MCF 10A (cell line): ENCODE measurements at regions of chr1 and their contacts with region 1.

Region 1: GRCh38 chr1:182084487-182085316 is 23.2 kb upstream of the ZNF648 start:
- DNase-seq: peak; percentile 91
- H3K4me3 Mint-ChIP-seq: no peak overlapping the region
- H3K27ac Mint-ChIP-seq: no peak overlapping the region
- H3K4me1 Mint-ChIP-seq: peaks cover 27% of the 10 kb centered on the region
- H3K27me3 Mint-ChIP-seq: no peaks in the 10 kb centered on the region
- CTCF ChIP-seq: peak; percentile 98

Region 2: DNA sequence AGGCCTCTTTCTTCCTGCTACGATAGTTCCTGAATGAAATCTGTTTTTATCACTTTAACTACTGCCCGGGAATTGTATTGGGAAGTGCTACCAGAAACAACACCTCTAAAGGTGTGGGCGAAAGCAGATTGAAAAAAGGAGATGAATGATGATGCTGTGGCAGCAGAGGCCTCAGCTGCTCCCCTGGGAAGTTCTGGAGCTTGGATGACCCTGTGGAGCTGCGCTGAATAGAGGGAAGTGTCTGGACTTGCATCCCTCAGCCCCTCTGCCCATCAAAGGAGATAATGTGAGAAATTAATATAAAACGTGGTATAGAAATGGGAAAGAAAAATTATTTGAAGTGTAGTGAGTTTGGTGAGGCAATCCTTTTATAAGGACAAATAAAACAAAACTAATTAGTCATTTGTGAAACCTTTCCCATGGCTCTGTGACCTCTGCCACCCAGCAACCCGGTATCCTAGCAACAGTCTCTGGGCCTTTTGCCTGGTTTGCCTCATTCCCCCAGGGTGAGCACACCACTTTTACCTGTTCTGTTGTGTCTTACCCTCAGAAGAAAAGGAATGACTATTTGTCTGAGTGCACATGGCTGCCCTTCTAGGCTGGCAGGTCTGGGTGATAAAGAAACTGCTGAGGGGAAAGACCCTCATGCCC is 1504.6 kb before region 1 on chr1:
- CTCF ChIA-PET with region 1: no interaction called
- POLR2A ChIA-PET with region 1: no interaction called
- intact Hi-C with region 1: no loop called
- DNase-seq: peak; percentile 93
- H3K4me3 Mint-ChIP-seq: no peak overlapping the region
- H3K27ac Mint-ChIP-seq: peak overlapping the region; percentile 30
- H3K4me1 Mint-ChIP-seq: peaks cover 38% of the 10 kb centered on the region
- H3K27me3 Mint-ChIP-seq: no peaks in the 10 kb centered on the region
- CTCF ChIP-seq: no peak

Region 3: GRCh38 chr1:181479137-181479745 is 605.5 kb before region 1 on chr1:
- CTCF ChIA-PET with region 1: interaction called, 169 read pairs
- POLR2A ChIA-PET with region 1: interaction called, 4 read pairs
- intact Hi-C with region 1: loop called (anchors 1 kb)
- DNase-seq: peak; percentile 80
- H3K4me3 Mint-ChIP-seq: no peak overlapping the region
- H3K27ac Mint-ChIP-seq: no peak overlapping the region
- H3K4me1 Mint-ChIP-seq: no peaks in the 10 kb centered on the region
- H3K27me3 Mint-ChIP-seq: peaks cover 28% of the 10 kb centered on the region
- CTCF ChIP-seq: peak; percentile 97

Region 4: DNA sequence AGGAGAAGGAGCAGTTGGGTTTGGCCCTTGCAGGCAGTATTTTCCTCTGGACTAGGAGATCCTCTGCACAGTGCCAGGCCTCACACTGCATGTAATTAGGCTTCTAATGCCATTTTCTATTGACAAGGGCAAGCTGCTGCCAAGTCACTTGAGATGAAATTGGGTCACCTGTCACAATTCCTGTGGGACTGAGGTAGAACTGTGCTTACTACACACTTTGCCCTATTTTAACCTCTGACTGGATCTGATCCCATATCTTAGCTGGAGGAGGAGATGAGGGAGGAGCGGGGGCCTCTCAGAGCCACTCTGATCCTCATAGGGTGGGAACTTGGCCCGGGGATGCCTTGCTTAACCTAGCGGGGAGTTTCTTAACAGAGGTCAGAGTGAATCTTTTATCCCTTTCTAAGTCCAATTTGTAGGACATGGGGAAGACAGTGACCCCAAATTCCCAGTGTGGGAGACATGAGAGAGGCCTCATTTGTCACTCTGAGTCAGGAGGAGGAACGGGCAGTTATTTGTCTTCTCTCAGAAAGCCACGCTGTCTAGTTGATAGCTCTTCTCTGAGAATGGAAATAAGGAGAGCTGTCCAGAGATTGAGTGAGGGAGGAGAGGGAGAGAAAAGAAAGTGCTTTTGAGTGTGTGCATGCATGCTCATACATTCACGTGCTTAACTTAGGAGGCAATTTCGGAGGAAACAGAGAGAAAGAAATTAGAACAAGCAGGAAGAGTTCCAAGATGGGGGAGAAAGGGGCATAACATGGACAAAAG is 480.0 kb before region 1 on chr1:
- CTCF ChIA-PET with region 1: no interaction called
- POLR2A ChIA-PET with region 1: no interaction called
- intact Hi-C with region 1: no loop called
- DNase-seq: no peak
- H3K4me3 Mint-ChIP-seq: no peak overlapping the region
- H3K27ac Mint-ChIP-seq: no peak overlapping the region
- H3K4me1 Mint-ChIP-seq: no peaks in the 10 kb centered on the region
- H3K27me3 Mint-ChIP-seq: peaks cover 38% of the 10 kb centered on the region
- CTCF ChIP-seq: no peak

Region 5: GRCh38 chr1:181992072-181992471 is 92.6 kb before region 1 on chr1:
- CTCF ChIA-PET with region 1: no interaction called
- POLR2A ChIA-PET with region 1: no interaction called
- intact Hi-C with region 1: no loop called
- DNase-seq: no peak
- H3K4me3 Mint-ChIP-seq: no peak overlapping the region
- H3K27ac Mint-ChIP-seq: no peak overlapping the region
- H3K4me1 Mint-ChIP-seq: no peaks in the 10 kb centered on the region
- H3K27me3 Mint-ChIP-seq: peaks cover 26% of the 10 kb centered on the region
- CTCF ChIP-seq: no peak

Region 6: GRCh38 chr1:182110635-182111034 is 25.9 kb after region 1 on chr1:
- CTCF ChIA-PET with region 1: interaction called, 19 read pairs
- POLR2A ChIA-PET with region 1: interaction called, 4 read pairs
- intact Hi-C with region 1: no loop called
- DNase-seq: no peak
- H3K4me3 Mint-ChIP-seq: no peak overlapping the region
- H3K27ac Mint-ChIP-seq: no peak overlapping the region
- H3K4me1 Mint-ChIP-seq: peaks cover 14% of the 10 kb centered on the region
- H3K27me3 Mint-ChIP-seq: no peaks in the 10 kb centered on the region
- CTCF ChIP-seq: no peak

Region 7: GRCh38 chr1:182215764-182216163 is 131.1 kb after region 1 on chr1:
- CTCF ChIA-PET with region 1: interaction called, 11 read pairs
- POLR2A ChIA-PET with region 1: interaction called, 3 read pairs
- intact Hi-C with region 1: no loop called
- DNase-seq: peak; percentile 28
- H3K4me3 Mint-ChIP-seq: no peak overlapping the region
- H3K27ac Mint-ChIP-seq: peak overlapping the region; percentile 7
- H3K4me1 Mint-ChIP-seq: peaks cover 32% of the 10 kb centered on the region
- H3K27me3 Mint-ChIP-seq: no peaks in the 10 kb centered on the region
- CTCF ChIP-seq: no peak

Region 8: DNA sequence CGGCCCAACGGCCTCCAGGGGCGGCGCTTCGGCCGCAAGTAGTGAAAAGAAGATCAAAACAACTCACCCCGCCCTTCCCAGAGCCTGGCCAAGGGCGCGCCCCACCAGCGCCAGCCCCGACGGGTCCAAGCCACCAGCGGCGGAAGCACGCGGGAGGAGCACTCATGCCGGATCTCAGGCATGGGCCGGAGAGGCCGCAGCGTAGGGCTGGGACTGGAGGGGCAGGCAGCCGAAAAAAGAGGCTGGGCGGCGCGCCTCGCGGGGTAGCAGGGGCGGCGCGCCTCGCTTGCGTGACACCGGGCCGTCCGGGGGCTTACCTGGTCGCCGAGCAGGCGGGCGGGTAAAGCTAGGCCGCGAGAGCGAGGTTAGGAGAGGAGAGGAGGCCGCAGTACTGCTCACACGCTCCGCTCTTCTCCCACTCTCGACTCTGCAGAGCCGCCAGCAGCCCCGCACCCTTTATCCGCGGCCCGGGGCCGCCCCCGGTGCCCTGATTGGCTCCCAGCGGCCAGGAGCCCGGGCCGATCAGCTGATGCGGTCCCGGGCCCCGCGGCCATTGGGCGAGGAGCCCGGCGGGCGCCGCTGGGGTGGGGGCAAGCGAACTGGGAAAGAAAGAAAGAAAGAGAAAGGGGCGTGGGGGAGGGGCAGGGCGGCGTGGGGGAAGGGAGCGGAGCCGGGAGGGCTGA is 306.8 kb after region 1 on chr1 and contains the start of gene GLUL:
- CTCF ChIA-PET with region 1: interaction called, 450 read pairs
- POLR2A ChIA-PET with region 1: interaction called, 112 read pairs
- intact Hi-C with region 1: loop called (anchors 1 kb)
- DNase-seq: peak; percentile 90
- H3K4me3 Mint-ChIP-seq: peak within 1 kb of the TSS; percentile 100
- H3K27ac Mint-ChIP-seq: peak within 1 kb of the TSS; percentile 100
- H3K4me1 Mint-ChIP-seq: peaks cover 27% of the 10 kb centered on the region
- H3K27me3 Mint-ChIP-seq: no peaks in the 10 kb centered on the region
- CTCF ChIP-seq: peak; percentile 2
- total RNA-seq, gene GLUL: 240 and 437 TPM in 2 replicates

Region 9: GRCh38 chr1:182595641-182596240 is 511.0 kb after region 1 on chr1:
- CTCF ChIA-PET with region 1: interaction called, 28 read pairs
- POLR2A ChIA-PET with region 1: interaction called, 3 read pairs
- intact Hi-C with region 1: loop called (anchors 1 kb)
- DNase-seq: peak; percentile 80
- H3K4me3 Mint-ChIP-seq: no peak overlapping the region
- H3K27ac Mint-ChIP-seq: no peak overlapping the region
- H3K4me1 Mint-ChIP-seq: peaks cover 6% of the 10 kb centered on the region
- H3K27me3 Mint-ChIP-seq: no peaks in the 10 kb centered on the region
- CTCF ChIP-seq: peak; percentile 92